Caco-2 (cell line): ENCODE measurements at regions of chr16 and their contacts with region 1.

Region 1: DNA sequence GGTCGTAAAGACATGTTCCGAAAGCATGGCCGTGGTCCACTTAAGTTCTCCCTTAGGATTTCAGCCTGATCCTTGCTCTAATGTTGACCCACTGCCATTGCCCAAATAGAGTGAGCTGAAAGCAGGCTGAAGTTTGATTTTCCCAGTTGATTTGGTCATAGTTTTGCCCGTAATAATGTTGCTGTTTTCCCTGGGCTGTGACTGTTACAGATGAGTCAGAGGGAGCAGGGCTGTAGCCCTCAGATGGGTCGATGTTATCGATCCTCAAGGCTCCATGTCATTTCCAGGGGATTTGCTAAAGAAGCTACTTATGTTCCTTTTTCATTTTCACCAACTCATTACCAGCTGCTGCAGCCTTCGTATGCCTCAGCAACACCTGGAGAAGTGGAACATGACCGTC is 169.0 kb upstream of the ZFHX3 start:
- DNase-seq: no peak
- H3K4me3 ChIP-seq: no peak overlapping the region
- H3K4me3 Mint-ChIP-seq: no peak overlapping the region
- H3K27ac Mint-ChIP-seq: no peak overlapping the region
- H3K4me1 ChIP-seq: no peaks in the 10 kb centered on the region
- H3K4me1 Mint-ChIP-seq: peaks cover 10% of the 10 kb centered on the region
- H3K27me3 ChIP-seq: no peaks in the 10 kb centered on the region
- H3K27me3 Mint-ChIP-seq: no peaks in the 10 kb centered on the region
- CTCF ChIP-seq: no peak

Region 2: GRCh38 chr16:73204366-73205156 is 12.4 kb before region 1 on chr16:
- CTCF ChIA-PET with region 1: no interaction called
- POLR2A ChIA-PET with region 1: no interaction called
- intact Hi-C with region 1: loop called (anchors 1 kb)
- DNase-seq: peak; percentile 66 to 83
- H3K4me3 ChIP-seq: no peak overlapping the region
- H3K4me3 Mint-ChIP-seq: peak overlapping the region; percentile 33
- H3K27ac Mint-ChIP-seq: no peak overlapping the region
- H3K4me1 ChIP-seq: peaks cover 24% of the 10 kb centered on the region
- H3K4me1 Mint-ChIP-seq: peaks cover 28% of the 10 kb centered on the region
- H3K27me3 ChIP-seq: no peaks in the 10 kb centered on the region
- H3K27me3 Mint-ChIP-seq: no peaks in the 10 kb centered on the region
- CTCF ChIP-seq: no peak

Region 3: GRCh38 chr16:73268366-73268993 is 51.5 kb after region 1 on chr16:
- CTCF ChIA-PET with region 1: no interaction called
- POLR2A ChIA-PET with region 1: no interaction called
- intact Hi-C with region 1: no loop called
- DNase-seq: peak in 1 of 2 experiments; percentile 34
- H3K4me3 ChIP-seq: no peak overlapping the region
- H3K4me3 Mint-ChIP-seq: no peak overlapping the region
- H3K27ac Mint-ChIP-seq: no peak overlapping the region
- H3K4me1 ChIP-seq: no peaks in the 10 kb centered on the region
- H3K4me1 Mint-ChIP-seq: no peaks in the 10 kb centered on the region
- H3K27me3 ChIP-seq: no peaks in the 10 kb centered on the region
- H3K27me3 Mint-ChIP-seq: peaks cover 13% of the 10 kb centered on the region
- CTCF ChIP-seq: peak; percentile 35 to 55

Region 4: DNA sequence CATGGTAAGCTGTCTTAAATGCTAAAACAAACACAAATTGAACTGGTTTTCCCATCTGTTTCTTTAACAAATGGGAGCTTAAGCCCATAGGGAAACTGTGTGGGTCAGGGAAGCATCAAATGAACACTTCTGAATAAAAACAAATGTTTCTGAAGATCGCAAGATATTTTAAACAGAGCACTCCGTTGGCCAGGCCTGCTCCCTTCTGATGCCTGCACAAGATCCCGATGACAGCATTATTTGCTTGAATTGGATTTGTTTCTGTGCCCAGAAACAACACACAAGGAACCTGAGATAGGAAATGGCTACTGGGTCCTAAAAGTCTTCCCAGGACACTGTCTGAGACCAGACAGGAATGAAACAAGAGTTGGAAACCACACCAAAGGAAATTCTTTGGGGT is 256.8 kb after region 1 on chr16:
- CTCF ChIA-PET with region 1: no interaction called
- POLR2A ChIA-PET with region 1: no interaction called
- intact Hi-C with region 1: no loop called
- DNase-seq: no peak
- H3K4me3 ChIP-seq: no peak overlapping the region
- H3K4me3 Mint-ChIP-seq: no peak overlapping the region
- H3K27ac Mint-ChIP-seq: no peak overlapping the region
- H3K4me1 ChIP-seq: no peaks in the 10 kb centered on the region
- H3K4me1 Mint-ChIP-seq: no peaks in the 10 kb centered on the region
- H3K27me3 ChIP-seq: no peaks in the 10 kb centered on the region
- H3K27me3 Mint-ChIP-seq: peaks cover 12% of the 10 kb centered on the region
- CTCF ChIP-seq: no peak